ENCODE measurements at regions of chr6 and their contacts with region 1.

Region 1: GRCh38 chr6:37691904-37692806 is 5.5 kb downstream of the MDGA1 start:
- DNase-seq: peak; percentile 65 to 97 (median 87)

Region 2: GRCh38 chr6:37018198-37019064 is 673.7 kb before region 1 on chr6:
- intact Hi-C with region 1: no loop called
- DNase-seq: peak; percentile 85 to 99 (median 94)

Region 3: GRCh38 chr6:37324131-37325033 is 367.8 kb before region 1 on chr6:
- intact Hi-C with region 1: loop called (anchors 10 kb)
- DNase-seq: no peak

Region 4: GRCh38 chr6:37339741-37340638 is 352.2 kb before region 1 on chr6:
- intact Hi-C with region 1: no loop called
- DNase-seq: no peak

Region 5: GRCh38 chr6:37362101-37362828 is 329.9 kb before region 1 on chr6:
- intact Hi-C with region 1: loop called (anchors 5 kb)
- DNase-seq: no peak

Region 6: GRCh38 chr6:37483917-37484785 is 208.0 kb before region 1 on chr6:
- intact Hi-C with region 1: loop called (anchors 1 kb)
- DNase-seq: peak; percentile 53 to 96 (median 76)

Measured in posterior cingulate gyrus (tissue), 11 donors.